ENCODE measurements at regions of chr1 and their contacts with region 1.

Region 1: GRCh38 chr1:47437447-47438164 is at the start of gene FOXD2:
- DNase-seq: peak; percentile 90
- H3K4me3 Mint-ChIP-seq: peak within 1 kb of the TSS; percentile 92
- H3K27ac Mint-ChIP-seq: peak within 1 kb of the TSS; percentile 53
- H3K4me1 Mint-ChIP-seq: peaks cover 24% of the 10 kb centered on the region
- H3K27me3 Mint-ChIP-seq: peaks cover 37% of the 10 kb centered on the region
- total RNA-seq, gene FOXD2: 0.12 to 0.19 TPM

Region 2: DNA sequence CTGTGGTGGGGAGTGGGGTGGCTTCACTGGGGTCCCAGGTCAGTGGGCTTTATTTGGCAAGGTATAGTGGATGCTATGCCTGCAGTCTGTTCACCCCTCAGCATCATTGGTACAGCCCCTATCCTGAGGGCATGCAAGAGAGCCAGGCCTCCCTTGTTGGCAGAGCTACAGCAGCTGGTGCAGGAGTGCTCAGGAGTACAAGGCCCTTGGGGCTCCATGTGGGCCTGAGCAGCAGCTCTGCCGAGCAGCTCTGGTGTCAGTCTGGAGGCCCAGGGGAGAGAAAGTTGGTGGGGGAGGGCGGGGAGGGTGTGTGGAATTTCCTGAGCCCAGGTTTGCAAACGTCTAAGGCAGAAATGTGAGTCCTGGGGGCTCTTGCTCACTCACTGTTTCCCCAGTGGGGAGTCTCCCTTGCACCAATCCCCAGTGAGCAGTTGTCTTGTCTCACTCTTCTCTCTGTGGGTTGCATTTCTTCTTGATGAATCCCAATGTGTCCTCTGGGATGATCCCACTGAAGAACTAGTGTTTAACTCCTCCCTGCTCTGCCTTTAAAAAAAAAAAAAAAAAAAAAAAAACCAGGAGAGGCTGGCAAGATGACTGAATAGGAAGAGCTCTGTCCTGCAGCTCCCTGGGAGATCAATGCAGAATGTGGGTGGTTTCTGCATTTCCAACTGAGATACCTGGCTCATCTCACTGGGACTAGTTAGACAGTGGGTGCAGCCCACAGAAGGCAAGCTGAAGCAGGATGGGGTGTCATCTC is 453.6 kb before region 1 on chr1:
- CTCF ChIA-PET with region 1: no interaction called
- intact Hi-C with region 1: no loop called
- DNase-seq: no peak
- H3K4me3 Mint-ChIP-seq: no peak overlapping the region
- H3K27ac Mint-ChIP-seq: no peak overlapping the region
- H3K4me1 Mint-ChIP-seq: no peaks in the 10 kb centered on the region
- H3K27me3 Mint-ChIP-seq: peaks cover 29% of the 10 kb centered on the region

Region 3: DNA sequence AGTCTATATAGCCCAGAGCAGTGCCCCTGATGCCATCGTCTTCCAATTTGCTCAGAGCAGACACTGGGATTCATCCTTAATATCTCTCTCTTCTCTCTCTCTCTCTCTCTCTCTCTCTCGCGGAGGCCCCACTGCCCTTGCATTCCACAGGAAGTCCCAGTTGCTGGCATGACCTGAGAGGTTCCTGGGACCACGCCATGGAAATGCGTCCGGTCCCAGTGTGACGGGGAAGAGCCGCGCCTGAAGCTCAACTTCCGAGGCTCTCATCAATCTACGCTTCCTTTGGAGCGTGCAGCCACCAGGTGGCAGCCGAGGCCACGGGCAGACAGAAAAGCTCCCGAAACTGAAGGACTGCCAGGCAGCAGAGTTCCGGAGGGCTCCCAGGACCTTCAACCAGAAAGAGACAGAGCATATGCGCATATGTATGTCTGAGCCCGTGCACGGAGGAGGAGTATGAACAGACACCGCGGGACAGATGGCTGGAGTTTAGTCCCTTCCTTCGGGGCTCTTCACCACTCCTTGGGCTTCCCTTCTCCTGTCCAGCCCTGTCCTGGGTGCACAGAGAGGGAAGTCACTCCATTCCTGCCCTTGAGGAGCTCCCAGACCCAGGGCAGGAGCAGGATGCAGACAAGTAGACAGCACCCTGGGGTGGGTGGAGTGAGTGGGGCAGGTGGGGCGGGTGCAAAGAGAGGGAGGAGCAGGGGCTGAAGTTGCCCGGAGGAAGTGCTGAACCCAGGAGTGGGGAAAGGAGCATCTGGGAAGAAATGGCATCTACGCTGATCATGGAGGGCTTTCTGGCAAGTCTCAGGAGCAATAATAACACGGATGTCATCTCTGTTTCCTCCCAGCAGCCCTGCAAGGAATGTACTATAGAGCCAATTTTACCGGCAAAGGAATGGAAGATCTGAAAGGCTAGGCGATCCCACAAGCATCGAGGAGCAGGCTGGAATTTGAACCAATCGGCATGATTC is 258.3 kb before region 1 on chr1:
- CTCF ChIA-PET with region 1: interaction called, 6 read pairs
- intact Hi-C with region 1: loop called (anchors 1 kb)
- DNase-seq: peak; percentile 90
- H3K4me3 Mint-ChIP-seq: peak overlapping the region; percentile 79
- H3K27ac Mint-ChIP-seq: no peak overlapping the region
- H3K4me1 Mint-ChIP-seq: peaks cover 10% of the 10 kb centered on the region
- H3K27me3 Mint-ChIP-seq: peaks cover 34% of the 10 kb centered on the region

Region 4: GRCh38 chr1:47333922-47334764 is 103.5 kb before region 1 on chr1:
- CTCF ChIA-PET with region 1: interaction called, 3 read pairs
- intact Hi-C with region 1: loop called (anchors 1 kb)
- DNase-seq: peak; percentile 75
- H3K4me3 Mint-ChIP-seq: peak overlapping the region; percentile 88
- H3K27ac Mint-ChIP-seq: peak overlapping the region; percentile 93
- H3K4me1 Mint-ChIP-seq: peaks cover 20% of the 10 kb centered on the region
- H3K27me3 Mint-ChIP-seq: no peaks in the 10 kb centered on the region

Region 5: GRCh38 chr1:47449822-47450552 is 12.4 kb after region 1 on chr1:
- CTCF ChIA-PET with region 1: interaction called, 19 read pairs
- intact Hi-C with region 1: loop called (anchors 1 kb)
- DNase-seq: peak; percentile 35
- H3K4me3 Mint-ChIP-seq: no peak overlapping the region
- H3K27ac Mint-ChIP-seq: no peak overlapping the region
- H3K4me1 Mint-ChIP-seq: peaks cover 9% of the 10 kb centered on the region
- H3K27me3 Mint-ChIP-seq: peaks cover 51% of the 10 kb centered on the region

Region 6: GRCh38 chr1:47547753-47548573 is 110.4 kb after region 1 on chr1:
- CTCF ChIA-PET with region 1: no interaction called
- intact Hi-C with region 1: loop called (anchors 2 kb)
- DNase-seq: no peak
- H3K4me3 Mint-ChIP-seq: no peak overlapping the region
- H3K27ac Mint-ChIP-seq: no peak overlapping the region
- H3K4me1 Mint-ChIP-seq: no peaks in the 10 kb centered on the region
- H3K27me3 Mint-ChIP-seq: peaks cover 3% of the 10 kb centered on the region

Region 7: DNA sequence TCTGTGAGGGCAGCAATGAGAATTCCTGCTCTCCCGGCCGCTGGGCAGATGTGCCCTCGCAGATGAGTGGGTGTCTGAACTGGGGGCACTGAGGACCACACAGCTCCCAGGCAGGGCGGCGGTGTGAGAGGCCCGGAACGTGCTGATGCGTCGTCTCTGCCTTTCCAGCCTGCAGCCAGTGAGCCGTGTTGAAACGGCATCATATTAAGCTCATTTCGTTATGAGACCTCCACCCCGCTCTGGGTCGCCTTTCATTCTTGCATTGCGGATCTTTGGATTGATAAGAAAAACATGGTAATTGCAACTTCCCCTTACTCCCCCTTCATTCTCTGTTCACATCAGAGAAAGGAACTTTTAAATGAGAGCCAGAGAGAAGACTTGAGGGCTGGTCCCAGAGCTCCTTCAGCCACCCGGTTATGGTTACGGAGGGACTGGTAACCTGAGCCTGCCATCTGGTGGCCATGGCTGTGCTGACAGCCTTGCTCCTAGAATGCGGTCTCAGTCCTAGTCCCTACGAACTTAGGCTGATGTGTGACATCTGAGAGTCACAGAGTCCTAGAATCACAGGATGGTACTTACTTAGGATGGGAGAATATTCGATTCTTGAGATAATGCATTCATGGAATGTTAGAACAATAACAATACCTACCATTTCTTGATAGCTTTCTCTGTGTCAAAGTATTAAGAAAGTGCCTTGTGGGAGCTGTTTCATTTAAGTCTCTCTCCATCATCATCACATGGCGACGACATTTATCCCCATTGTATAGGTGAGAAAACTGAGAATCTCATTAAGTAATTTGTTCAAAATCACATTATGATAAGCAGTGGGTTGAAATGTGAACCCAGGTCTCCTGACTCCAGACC is 288.6 kb after region 1 on chr1:
- CTCF ChIA-PET with region 1: interaction called, 34 read pairs
- intact Hi-C with region 1: loop called (anchors 1 kb)
- DNase-seq: peak; percentile 83
- H3K4me3 Mint-ChIP-seq: peak overlapping the region; percentile 30
- H3K27ac Mint-ChIP-seq: no peak overlapping the region
- H3K4me1 Mint-ChIP-seq: peaks cover 7% of the 10 kb centered on the region
- H3K27me3 Mint-ChIP-seq: peaks cover 30% of the 10 kb centered on the region